Activated T-helper 1 cell treated with anti-CD3 and anti-CD28 coated beads, Interleukin-12 subunit alpha, Interleukin-12 subunit beta, Interleukin-2, Interleukin-4 antibody, amounts not matched to agents 30 ng/mL and 10 ng/mL and 1 ng/mL, durations not matched to agents 14 hours and 24 hours and 36 hours (primary cell): ENCODE measurements at regions of chr20 and their contacts with region 1.

Region 1: GRCh38 chr20:16729565-16730456 is at the start of gene SNRPB2:
- DNase-seq: peak; percentile 88
- H3K4me3 Mint-ChIP-seq: peak within 1 kb of the TSS; percentile 98
- H3K27ac Mint-ChIP-seq: peak within 1 kb of the TSS; percentile 98
- H3K4me1 Mint-ChIP-seq: peaks cover 50% of the 10 kb centered on the region
- H3K27me3 Mint-ChIP-seq: peaks cover 8% of the 10 kb centered on the region
- total RNA-seq, gene SNRPB2: 130 and 131 TPM in 2 replicates

Region 2: DNA sequence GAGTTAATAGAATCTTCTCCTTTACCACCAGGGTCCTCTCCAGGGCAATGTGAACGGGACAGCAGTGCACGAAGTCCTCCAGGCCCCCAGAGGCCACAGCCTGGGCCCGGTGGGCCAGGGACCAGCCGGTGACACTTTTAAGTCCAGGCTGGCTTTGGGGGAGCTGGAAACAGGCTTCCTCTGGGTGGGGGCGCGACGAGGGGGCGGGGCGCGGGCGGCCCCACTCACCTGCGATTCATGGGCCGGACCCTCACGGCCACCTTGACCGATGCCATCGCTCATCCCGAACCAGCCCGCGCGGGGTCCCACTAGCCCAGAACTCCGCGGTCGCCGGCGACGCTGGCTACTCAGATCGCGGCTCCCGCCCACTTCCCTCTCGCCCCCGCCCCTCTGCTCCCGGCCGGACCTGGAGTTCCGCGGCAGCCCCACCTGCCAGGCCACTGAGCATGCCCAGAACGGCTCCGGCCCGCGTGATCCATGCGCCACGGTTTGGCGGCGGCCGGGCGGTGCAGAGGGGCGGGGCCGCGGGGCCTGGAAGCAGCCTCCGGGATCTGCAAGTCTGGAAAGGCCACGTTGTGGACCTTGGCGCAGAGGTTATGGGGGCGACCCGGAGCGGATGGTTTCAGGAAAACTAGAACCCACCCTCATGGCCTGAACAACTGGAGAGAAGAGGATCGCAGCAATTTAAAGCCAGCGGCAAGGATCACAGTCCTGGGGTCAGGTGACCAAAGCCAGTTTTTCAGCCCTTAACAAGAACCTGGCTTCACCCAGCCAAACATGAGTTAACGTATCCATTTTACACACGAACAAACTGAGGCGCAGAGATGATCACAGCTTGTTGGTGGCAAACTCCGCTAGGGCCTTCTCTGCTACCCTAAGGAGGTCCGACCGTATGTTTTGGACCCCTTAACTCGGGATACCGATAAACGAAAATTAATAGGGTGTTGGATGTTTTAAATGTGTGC is 156.5 kb before region 1 on chr20 and contains the start of gene KIF16B:
- intact Hi-C with region 1: loop called (anchors 1 kb)
- DNase-seq: peak; percentile 83
- H3K4me3 Mint-ChIP-seq: peak within 1 kb of the TSS; percentile 90
- H3K27ac Mint-ChIP-seq: peak within 1 kb of the TSS; percentile 91
- H3K4me1 Mint-ChIP-seq: peaks cover 36% of the 10 kb centered on the region
- H3K27me3 Mint-ChIP-seq: no peaks in the 10 kb centered on the region
- total RNA-seq, gene KIF16B: 7.2 and 8.1 TPM in 2 replicates

Region 3: DNA sequence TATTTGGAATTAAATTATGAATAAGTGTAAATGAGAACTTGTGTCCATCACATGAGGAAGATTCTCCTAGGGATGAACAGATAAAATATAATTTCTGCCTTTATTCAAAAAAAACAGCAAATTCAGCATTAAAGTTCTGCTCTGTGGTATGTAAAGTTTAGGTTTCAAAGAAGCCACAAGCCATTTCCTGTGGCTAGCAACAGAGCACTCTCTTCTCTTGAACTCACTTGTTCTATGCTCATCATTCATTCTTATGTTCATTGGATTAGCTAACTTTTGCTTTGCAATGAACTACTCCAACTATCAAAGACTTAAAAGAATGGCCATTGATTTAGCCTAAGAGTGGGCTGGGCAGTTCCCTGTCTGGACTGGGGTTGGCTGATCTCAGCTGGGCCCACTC is 20.8 kb before region 1 on chr20:
- intact Hi-C with region 1: loop called (anchors 1 kb)
- DNase-seq: peak; percentile 31
- H3K4me3 Mint-ChIP-seq: peak overlapping the region; percentile 9
- H3K27ac Mint-ChIP-seq: no peak overlapping the region
- H3K4me1 Mint-ChIP-seq: peaks cover 30% of the 10 kb centered on the region
- H3K27me3 Mint-ChIP-seq: peaks cover 19% of the 10 kb centered on the region